CD4-positive, alpha-beta memory T cell (primary cell): ENCODE measurements at regions of chr6 and their contacts with region 1.

Region 1: DNA sequence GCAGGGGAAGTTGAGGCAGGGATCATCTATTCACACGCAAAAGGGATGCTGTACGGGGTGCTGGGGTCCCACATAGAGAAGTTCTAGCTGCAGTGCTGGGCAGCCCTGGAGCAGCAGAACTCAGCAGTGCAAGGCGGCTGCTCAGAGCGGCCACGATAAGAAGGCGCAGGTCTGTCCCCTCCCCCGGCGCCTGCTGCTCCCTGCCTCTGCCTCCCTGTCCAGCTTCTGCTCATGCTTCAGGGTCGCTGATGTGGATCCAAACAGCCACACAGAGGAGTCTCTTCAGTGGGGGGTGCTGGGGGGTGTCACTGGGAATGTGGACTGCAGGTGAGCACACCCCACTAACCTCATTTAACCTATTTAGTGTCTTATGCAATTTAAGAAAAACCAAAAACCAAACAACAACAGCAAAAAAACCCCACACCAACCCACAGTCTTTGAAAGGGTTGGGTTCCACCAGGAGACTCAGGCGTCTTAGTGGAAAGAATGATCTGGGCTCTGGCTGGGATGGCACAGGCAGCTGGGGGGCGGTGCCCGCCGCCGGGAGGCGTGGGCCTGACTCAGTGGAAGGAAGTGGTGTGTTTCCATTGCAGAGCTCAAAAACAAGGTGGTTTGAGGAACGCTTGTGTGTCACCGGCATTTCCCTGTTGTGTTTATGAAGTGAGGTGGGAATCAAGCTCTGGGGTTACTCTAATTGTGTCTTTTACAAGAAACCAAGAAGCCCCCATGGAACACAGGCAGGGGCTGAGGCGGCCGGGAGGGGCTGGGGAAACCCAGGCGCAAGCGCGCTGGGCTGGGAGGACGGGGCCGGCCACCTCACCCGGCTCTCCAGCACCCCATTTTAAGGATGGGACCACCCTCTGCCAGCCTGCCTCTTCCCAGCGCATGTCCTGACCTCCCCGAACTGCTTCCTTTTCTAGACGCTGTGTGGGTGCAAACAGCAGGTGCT is 55.1 kb downstream of the IRF4 start:
- DNase-seq: peak; percentile 67 to 96 (median 76)
- H3K4me3 ChIP-seq: peak overlapping the region; percentile 28 to 60
- H3K4me3 Mint-ChIP-seq: peak overlapping the region; percentile 78 to 92 (median 82)
- H3K27ac ChIP-seq: peak overlapping the region; percentile 54
- H3K27ac Mint-ChIP-seq: peak overlapping the region; percentile 81 to 95 (median 88)
- H3K4me1 ChIP-seq: peaks cover 53% of the 10 kb centered on the region
- H3K4me1 Mint-ChIP-seq: peaks cover 33 to 54% (median 48%) of the 10 kb centered on the region in 4 donors
- H3K27me3 ChIP-seq: no peaks in the 10 kb centered on the region
- H3K27me3 Mint-ChIP-seq: peaks cover 0 to 2% of the 10 kb centered on the region in 2 donors

Region 2: GRCh38 chr6:379367-380181 is 67.1 kb before region 1 on chr6:
- CTCF ChIA-PET with region 1: no interaction called
- POLR2A ChIA-PET with region 1: no interaction called
- intact Hi-C with region 1: no loop called
- DNase-seq: no peak
- H3K4me3 ChIP-seq: no peak overlapping the region
- H3K4me3 Mint-ChIP-seq: peak overlapping the region in 1 of 8 donors; percentile 15
- H3K27ac ChIP-seq: no peak overlapping the region
- H3K27ac Mint-ChIP-seq: no peak overlapping the region
- H3K4me1 ChIP-seq: no peaks in the 10 kb centered on the region
- H3K4me1 Mint-ChIP-seq: no peaks in the 10 kb centered on the region
- H3K27me3 ChIP-seq: no peaks in the 10 kb centered on the region
- H3K27me3 Mint-ChIP-seq: peaks cover 20 to 28% of the 10 kb centered on the region in 2 donors

Region 3: GRCh38 chr6:474453-475185 is 27.9 kb after region 1 on chr6:
- CTCF ChIA-PET with region 1: interaction called, 7 read pairs
- POLR2A ChIA-PET with region 1: interaction called, 23 read pairs
- intact Hi-C with region 1: loop called (anchors 1 kb)
- DNase-seq: peak; percentile 66 to 77 (median 68)
- H3K4me3 ChIP-seq: peak overlapping the region; percentile 32 to 38
- H3K4me3 Mint-ChIP-seq: peak overlapping the region; percentile 30 to 80 (median 75)
- H3K27ac ChIP-seq: no peak overlapping the region
- H3K27ac Mint-ChIP-seq: peak overlapping the region in 5 of 7 donors; percentile 22 to 88 (median 59)
- H3K4me1 ChIP-seq: peaks cover 34% of the 10 kb centered on the region
- H3K4me1 Mint-ChIP-seq: peaks cover 33 to 44% (median 37%) of the 10 kb centered on the region in 4 donors
- H3K27me3 ChIP-seq: no peaks in the 10 kb centered on the region
- H3K27me3 Mint-ChIP-seq: no peaks in the 10 kb centered on the region

Region 4: DNA sequence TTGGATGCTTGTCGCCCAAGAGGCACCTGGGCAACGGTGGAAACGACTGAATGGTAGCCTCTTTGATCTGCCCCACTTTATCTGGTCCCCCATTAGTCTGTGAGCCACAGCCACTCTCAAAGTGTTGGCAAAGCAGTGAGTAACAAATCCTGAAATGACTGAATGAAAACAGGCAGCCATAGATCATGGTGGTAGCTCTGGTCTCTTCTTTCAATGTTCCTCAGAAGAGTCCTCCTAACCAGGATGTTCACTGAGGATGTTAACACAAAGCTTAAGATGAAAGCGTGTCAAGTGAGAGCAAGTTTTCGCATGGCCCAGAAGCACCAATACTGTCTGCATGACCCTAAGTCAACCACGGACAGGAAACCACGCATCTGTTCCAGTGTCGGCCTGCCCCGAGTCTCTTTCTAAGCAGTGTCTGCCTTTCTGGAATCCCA is 52.1 kb after region 1 on chr6:
- CTCF ChIA-PET with region 1: interaction called, 6 read pairs
- POLR2A ChIA-PET with region 1: interaction called, 25 read pairs
- intact Hi-C with region 1: loop called (anchors 2 kb)
- DNase-seq: peak in 1 of 5 donors; percentile 70
- H3K4me3 ChIP-seq: peak overlapping the region in 1 of 2 donors; percentile 25
- H3K4me3 Mint-ChIP-seq: peak overlapping the region; percentile 55 to 83 (median 76)
- H3K27ac ChIP-seq: peak overlapping the region; percentile 19
- H3K27ac Mint-ChIP-seq: peak overlapping the region; percentile 19 to 94 (median 84)
- H3K4me1 ChIP-seq: peaks cover 51% of the 10 kb centered on the region
- H3K4me1 Mint-ChIP-seq: peaks cover 45 to 70% (median 59%) of the 10 kb centered on the region in 4 donors
- H3K27me3 ChIP-seq: no peaks in the 10 kb centered on the region
- H3K27me3 Mint-ChIP-seq: no peaks in the 10 kb centered on the region